ENCODE measurements at regions of chr6 and their contacts with region 1.

Region 1: DNA sequence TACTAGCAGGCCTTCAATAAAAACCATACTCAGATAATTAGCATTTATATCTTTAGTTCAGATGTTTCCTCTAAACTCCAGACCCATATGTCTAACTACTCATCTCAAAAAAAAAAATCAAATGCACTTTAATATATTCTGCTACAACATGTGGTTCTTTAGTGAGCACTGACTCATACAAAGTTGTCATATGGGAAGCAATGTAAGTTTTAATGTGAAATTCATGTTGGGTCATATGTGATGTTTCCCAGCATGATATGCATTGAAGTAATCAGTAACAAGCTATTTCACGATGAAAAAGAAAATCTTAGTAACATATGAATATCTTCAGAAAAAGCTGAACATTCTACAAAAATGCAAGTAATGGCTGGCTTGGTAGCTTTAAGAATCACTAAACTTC is 859.7 kb upstream of the ADGRB3 start:
- DNase-seq: no peak
- ATAC-seq: no peak
- H3K4me3 ChIP-seq: no peak overlapping the region
- H3K27ac ChIP-seq: no peak overlapping the region
- H3K4me1 ChIP-seq: no peaks in the 10 kb centered on the region
- H3K27me3 ChIP-seq: no peaks in the 10 kb centered on the region
- CTCF ChIP-seq: no peak
- EP300 ChIP-seq: no peak
- POLR2A ChIP-seq: no peak
- RAD21 ChIP-seq: no peak

Region 2: GRCh38 chr6:67792996-67793395 is 17.7 kb after region 1 on chr6:
- CTCF ChIA-PET with region 1: no interaction called
- POLR2A ChIA-PET with region 1: no interaction called
- in situ Hi-C with region 1: no loop called
- intact Hi-C with region 1: no loop called
- DNase-seq: peak in 3 of 4 experiments; percentile 11 to 60 (median 17)
- ATAC-seq: peak; percentile 86
- H3K4me3 ChIP-seq: no peak overlapping the region
- H3K27ac ChIP-seq: peak overlapping the region; percentile 49
- H3K4me1 ChIP-seq: peaks cover 0 to 8% of the 10 kb centered on the region in 2 experiments; a peak in 2 of 5 replicates
- H3K27me3 ChIP-seq: no peaks in the 10 kb centered on the region
- CTCF ChIP-seq: no peak
- EP300 ChIP-seq: peak; percentile 15; the same call in 1 of the 2 replicates
- POLR2A ChIP-seq: no peak
- RAD21 ChIP-seq: no peak

Region 3: DNA sequence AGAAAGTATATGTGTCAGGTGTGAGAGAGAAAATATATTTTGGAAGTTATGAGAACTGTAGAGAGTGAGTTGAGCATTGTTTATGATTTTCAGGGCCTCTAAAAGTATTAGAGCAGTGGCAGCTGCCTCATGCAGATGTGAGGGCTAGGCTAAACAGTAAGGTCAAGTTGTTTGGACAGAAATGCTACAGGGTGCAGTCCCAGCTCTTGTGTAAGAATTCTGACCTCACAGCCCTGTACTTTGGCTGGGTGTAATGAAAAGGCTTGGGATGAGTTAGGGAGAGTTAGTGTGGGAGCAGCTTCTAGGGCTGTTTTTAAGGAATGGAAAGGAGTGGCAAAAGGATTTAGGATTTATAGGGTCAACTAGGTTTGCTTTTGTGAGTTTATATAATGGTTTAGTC is 95.0 kb after region 1 on chr6:
- CTCF ChIA-PET with region 1: no interaction called
- POLR2A ChIA-PET with region 1: no interaction called
- in situ Hi-C with region 1: no loop called
- intact Hi-C with region 1: loop called (anchors 10 kb)
- DNase-seq: no peak
- ATAC-seq: no peak
- H3K4me3 ChIP-seq: no peak overlapping the region
- H3K27ac ChIP-seq: no peak overlapping the region
- H3K4me1 ChIP-seq: no peaks in the 10 kb centered on the region
- H3K27me3 ChIP-seq: no peaks in the 10 kb centered on the region
- CTCF ChIP-seq: no peak
- EP300 ChIP-seq: no peak
- POLR2A ChIP-seq: no peak
- RAD21 ChIP-seq: no peak

Measured in K562 (cell line).